ENCODE measurements at regions of chr11 and their contacts with region 1.

Region 1: GRCh38 chr11:44936525-44936924 is 14.2 kb downstream of the TP53I11 start:
- DNase-seq: peak; percentile 55
- ATAC-seq: peak; percentile 89
- H3K4me3 ChIP-seq: no peak overlapping the region
- H3K27ac ChIP-seq: no peak overlapping the region
- H3K4me1 ChIP-seq: no peaks in the 10 kb centered on the region
- H3K27me3 ChIP-seq: no peaks in the 10 kb centered on the region
- CTCF ChIP-seq: peak; percentile 92 to 95 (median 93)
- POLR2A ChIP-seq: no peak
- RAD21 ChIP-seq: peak; percentile 94

Region 2: DNA sequence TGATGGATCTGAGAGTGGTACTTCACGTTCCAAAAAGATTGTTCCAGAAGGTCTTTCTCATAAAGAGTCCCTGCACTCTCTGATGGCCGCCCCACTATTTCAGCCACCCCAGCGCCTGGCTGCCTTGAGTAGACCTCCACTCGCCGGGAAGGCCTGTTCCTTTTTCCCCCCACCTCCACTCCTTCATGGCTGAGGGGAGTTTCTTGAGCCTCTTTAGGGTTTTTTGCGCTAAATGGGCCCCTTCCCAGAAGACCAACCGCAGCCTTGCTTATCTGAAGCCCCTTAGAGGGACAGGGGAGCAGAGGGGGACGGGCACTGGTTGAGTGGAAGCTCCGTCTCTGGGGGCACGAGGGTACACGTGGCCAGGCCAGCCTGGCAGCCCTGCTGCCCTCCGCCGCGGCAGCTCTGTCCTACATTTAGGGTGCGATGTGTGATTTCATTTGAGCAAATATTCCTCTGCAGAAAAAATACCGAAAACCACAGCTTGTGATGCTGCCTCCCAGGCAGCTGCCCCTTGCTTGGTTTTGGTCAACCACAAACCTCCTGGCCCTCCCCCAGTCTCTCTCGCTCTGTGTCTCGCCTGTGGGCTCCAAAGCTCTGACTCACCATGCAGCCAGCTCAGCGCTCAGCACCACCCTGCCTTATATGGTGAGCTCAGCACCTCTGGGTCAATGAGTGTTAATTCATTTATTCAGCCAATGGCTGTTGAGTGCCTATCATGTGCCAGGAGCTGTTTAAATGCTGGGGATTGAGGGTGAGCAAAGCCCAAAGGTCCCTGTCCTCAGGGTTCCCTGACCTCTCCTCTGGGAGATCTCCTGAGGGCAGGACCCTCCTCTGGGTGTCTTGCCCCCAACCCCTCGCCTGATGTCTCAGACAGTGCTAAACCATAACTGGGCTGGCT is 74.4 kb before region 1 on chr11:
- CTCF ChIA-PET with region 1: no interaction called
- POLR2A ChIA-PET with region 1: no interaction called
- RAD21 ChIA-PET with region 1: no interaction called
- intact Hi-C with region 1: no loop called
- DNase-seq: peak; percentile 89
- ATAC-seq: peak; percentile 99
- H3K4me3 ChIP-seq: 0 out of 4 replicates have a peak overlapping the region, but pooled peaks of 1 of the 2 experiments have one; percentile 11
- H3K27ac ChIP-seq: peak overlapping the region; percentile 52
- H3K4me1 ChIP-seq: peaks cover 14 to 17% of the 10 kb centered on the region in 2 experiments
- H3K27me3 ChIP-seq: peaks cover 11% of the 10 kb centered on the region; the same call in 1 of the 2 replicates
- CTCF ChIP-seq: no peak
- POLR2A ChIP-seq: no peak
- RAD21 ChIP-seq: no peak

Region 3: DNA sequence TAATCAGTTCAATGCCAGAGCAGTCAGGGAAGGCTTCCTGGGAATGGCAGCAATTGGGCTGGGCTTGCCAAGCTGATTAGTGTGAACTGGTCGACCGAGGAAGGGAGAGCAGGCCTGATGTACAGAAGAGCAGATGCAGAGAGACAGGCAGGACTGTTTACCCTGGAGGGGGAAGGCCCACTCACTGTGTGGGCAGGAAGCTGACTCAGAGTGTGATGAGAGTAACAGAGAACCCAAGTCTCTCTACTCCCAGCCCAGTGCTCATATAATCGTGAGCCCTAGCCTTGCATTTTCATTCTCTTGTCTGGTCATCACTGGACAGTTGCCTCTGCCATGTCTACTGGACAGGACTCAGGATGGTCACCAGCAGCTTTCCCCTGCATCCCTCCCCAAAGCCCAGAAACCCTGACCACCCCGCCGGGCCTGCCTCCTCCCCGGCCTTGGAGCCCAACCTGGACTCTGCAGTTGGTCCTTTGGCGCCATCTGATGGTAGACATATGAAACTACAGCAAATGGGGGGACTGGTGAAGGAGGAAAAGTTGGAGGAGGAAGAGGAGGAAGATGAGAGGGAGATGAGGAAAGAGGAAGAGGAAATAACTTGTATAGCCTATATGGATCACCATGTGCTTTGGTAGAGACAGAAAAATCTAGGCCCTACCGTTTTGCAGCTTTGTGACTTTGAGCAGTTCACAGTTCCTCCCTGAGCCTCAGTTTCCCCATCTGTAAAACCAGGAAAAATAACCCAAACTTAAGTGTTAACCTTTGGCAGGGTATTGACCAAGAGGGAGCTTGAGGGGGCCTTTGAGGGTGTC is 166.5 kb after region 1 on chr11:
- CTCF ChIA-PET with region 1: interaction called, 236 read pairs
- POLR2A ChIA-PET with region 1: interaction called, 4 read pairs
- RAD21 ChIA-PET with region 1: interaction called, 11 to 26 read pairs
- intact Hi-C with region 1: loop called (anchors 1 kb)
- DNase-seq: peak; percentile 45
- ATAC-seq: peak; percentile 68
- H3K4me3 ChIP-seq: no peak overlapping the region
- H3K27ac ChIP-seq: no peak overlapping the region
- H3K4me1 ChIP-seq: peaks cover 0 to 7% of the 10 kb centered on the region in 2 experiments; a peak in 2 of 4 replicates
- H3K27me3 ChIP-seq: peaks cover 20% of the 10 kb centered on the region
- CTCF ChIP-seq: peak; percentile 91 to 97 (median 96)
- POLR2A ChIP-seq: no peak
- RAD21 ChIP-seq: peak; percentile 97

Region 4: DNA sequence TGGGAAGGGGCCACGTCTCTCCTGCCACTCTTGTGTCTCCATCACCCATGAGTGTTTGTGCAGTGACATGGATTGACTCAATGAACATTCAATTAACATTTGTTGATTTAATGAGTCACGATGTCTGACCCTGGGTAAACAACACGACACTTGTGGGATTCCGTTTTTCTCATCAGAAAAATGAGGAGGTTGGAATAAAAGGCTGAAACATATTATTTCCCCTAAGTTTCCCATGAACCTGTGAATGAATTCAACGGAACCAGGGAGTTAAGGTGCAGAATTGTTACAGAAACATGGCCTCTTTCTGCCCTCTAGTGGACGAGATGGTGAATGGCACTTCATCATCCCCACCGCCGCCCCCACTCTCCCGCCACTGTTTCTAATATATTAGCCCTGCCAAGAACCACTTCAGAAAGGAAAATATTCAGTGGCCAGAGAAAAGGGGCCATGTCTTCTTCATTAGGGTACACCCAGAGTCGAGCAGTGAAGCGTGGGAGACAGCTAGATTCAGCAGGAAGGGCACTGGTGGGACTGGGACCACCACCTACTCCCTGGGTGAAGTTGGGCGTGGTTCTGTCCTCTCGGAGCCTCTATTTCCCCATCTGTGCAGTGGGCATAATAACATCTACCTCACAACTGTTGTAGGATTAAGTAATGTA is 395.9 kb after region 1 on chr11:
- CTCF ChIA-PET with region 1: interaction called, 3 read pairs
- POLR2A ChIA-PET with region 1: no interaction called
- RAD21 ChIA-PET with region 1: no interaction called
- intact Hi-C with region 1: loop called (anchors 1 kb)
- DNase-seq: peak; percentile 29
- ATAC-seq: peak; percentile 75
- H3K4me3 ChIP-seq: no peak overlapping the region
- H3K27ac ChIP-seq: no peak overlapping the region
- H3K4me1 ChIP-seq: peaks cover 6 to 16% of the 10 kb centered on the region in 2 experiments; a peak in 3 of 4 replicates
- H3K27me3 ChIP-seq: no peaks in the 10 kb centered on the region
- CTCF ChIP-seq: peak; percentile 45 to 60 (median 56); a peak in 5 of 6 replicates
- POLR2A ChIP-seq: no peak
- RAD21 ChIP-seq: peak; percentile 75